Activated T-helper 1 cell treated with anti-CD3 and anti-CD28 coated beads, Interleukin-12 subunit alpha, Interleukin-12 subunit beta, Interleukin-2, Interleukin-4 antibody, amounts not matched to agents 30 ng/mL and 10 ng/mL and 1 ng/mL, durations not matched to agents 14 hours and 24 hours and 36 hours (primary cell): ENCODE measurements at regions of chr2 and their contacts with region 1.

Region 1: DNA sequence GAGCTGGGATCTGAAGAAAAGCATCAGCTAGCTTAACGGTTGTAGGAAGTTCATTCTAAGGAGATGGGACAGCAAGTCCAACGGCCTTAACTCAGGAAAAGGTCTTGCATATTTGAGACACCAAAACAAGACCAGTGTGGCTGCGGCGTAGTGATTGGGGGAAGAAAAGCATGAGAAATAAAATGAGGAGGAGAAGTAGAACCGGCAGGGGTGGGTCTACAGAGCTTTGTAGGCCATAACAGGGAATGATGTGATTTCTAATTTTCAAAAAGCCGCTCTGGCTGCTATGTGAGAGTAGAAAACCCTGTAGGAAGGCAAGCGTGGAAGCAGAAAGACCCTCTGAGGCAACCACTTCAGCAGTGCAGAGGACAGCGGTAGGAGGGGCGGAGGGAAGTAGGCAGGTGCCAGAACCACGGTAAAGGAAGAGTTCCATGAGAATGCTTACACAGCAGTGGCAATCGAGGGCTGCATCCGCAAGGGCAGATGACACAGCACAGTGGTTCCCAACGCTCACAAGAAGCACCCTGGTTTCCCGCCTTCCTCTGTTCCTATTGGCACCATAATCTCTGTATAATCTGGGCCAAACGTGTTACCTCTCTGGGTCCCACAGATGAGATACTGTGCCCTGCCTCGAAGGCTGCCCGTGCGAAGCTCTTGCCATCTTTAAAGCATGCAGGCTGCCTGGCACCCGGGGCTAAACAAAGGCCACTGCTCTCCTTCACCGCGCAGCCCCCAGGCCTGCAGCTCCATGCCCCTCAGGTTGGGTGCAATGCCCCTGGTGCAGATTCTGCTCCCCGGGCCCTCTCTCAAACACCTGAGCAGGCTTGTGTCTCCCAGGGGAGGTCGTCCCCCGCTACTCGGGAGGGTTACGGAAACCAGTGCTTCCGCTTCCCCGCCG is 791 bp downstream of the ANKRD39 start:
- DNase-seq: no peak
- H3K4me3 Mint-ChIP-seq: peak overlapping the region; percentile 85
- H3K27ac Mint-ChIP-seq: peak overlapping the region; percentile 88
- H3K4me1 Mint-ChIP-seq: peaks cover 26% of the 10 kb centered on the region
- H3K27me3 Mint-ChIP-seq: no peaks in the 10 kb centered on the region

Region 2: GRCh38 chr2:96208143-96209010 is 648.6 kb before region 1 on chr2 and contains the start of gene STARD7:
- intact Hi-C with region 1: no loop called
- DNase-seq: peak; percentile 98
- H3K4me3 Mint-ChIP-seq: peak within 1 kb of the TSS; percentile 96
- H3K27ac Mint-ChIP-seq: peak within 1 kb of the TSS; percentile 94
- H3K4me1 Mint-ChIP-seq: peaks cover 57% of the 10 kb centered on the region
- H3K27me3 Mint-ChIP-seq: no peaks in the 10 kb centered on the region
- total RNA-seq, gene STARD7: 216 and 229 TPM in 2 replicates

Region 3: GRCh38 chr2:96739633-96740428 is 117.2 kb before region 1 on chr2 and contains the start of gene LMAN2L:
- intact Hi-C with region 1: loop called (anchors 5 kb)
- DNase-seq: peak; percentile 94
- H3K4me3 Mint-ChIP-seq: peak within 1 kb of the TSS; percentile 90
- H3K27ac Mint-ChIP-seq: peak within 1 kb of the TSS; percentile 77
- H3K4me1 Mint-ChIP-seq: peaks cover 32% of the 10 kb centered on the region
- H3K27me3 Mint-ChIP-seq: no peaks in the 10 kb centered on the region
- total RNA-seq, gene LMAN2L: 5.6 and 6.0 TPM in 2 replicates

Region 4: DNA sequence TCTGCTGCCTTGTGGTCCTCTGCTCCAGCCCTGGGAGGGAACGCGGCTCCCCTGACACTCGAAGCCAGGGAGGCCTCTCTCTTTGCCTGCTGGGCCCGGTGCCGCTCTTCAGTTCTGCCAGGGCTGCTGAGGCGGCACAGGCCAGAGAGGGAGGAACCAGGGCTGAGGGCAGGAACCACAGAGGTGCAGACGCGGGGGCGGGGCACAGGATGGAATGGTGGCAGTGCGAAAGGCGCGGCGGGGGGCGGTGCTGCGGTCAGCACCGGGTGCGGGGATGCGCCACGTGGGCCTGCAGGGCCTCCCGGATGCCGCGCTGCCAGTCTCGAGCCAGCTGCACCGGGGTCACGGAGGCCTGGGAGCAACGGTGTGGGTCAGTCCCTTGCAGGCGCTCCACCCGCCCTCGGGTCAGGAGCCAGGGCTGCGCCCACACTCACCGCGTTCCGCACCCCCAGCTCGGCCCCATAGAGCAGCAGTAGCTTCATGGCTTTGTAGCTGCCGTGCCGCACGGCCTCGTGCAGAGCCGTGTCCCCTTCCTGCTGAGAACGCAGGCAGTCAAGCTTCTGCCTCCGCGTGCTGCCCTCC is 17.6 kb before region 1 on chr2:
- intact Hi-C with region 1: loop called (anchors 2 kb)
- DNase-seq: peak; percentile 74
- H3K4me3 Mint-ChIP-seq: peak overlapping the region; percentile 45
- H3K27ac Mint-ChIP-seq: peak overlapping the region; percentile 65
- H3K4me1 Mint-ChIP-seq: peaks cover 14% of the 10 kb centered on the region
- H3K27me3 Mint-ChIP-seq: no peaks in the 10 kb centered on the region

Region 5: DNA sequence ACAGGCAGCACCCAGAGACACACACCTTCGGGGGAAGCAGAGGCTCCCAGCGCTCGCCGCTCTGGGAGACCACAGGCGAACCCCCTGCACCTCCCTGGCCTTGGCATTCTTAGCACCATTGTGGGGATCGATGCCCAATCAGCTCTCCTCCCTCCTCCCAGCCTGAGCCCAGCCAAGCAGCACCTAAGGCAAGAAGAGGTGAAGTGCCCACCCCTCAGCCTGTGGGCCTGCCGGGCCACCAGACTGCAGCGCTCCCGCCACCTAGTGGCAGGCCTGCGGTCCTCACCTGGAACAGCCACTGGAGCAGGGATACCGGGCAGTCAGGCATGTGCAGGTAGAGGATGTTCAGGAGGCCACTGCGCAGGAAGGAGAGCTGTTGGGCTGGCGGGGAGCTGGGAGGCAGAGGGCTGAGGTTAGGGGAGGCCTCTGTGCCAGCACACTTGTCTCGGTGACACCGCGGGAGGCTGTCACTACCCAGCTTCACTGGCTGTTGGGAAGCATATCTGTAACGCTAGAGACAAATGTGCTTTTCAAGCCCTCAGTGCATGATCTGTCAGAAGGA is 94.1 kb after region 1 on chr2:
- intact Hi-C with region 1: loop called (anchors 1 kb)
- DNase-seq: peak; percentile 68
- H3K4me3 Mint-ChIP-seq: no peak overlapping the region
- H3K27ac Mint-ChIP-seq: no peak overlapping the region
- H3K4me1 Mint-ChIP-seq: peaks cover 31% of the 10 kb centered on the region
- H3K27me3 Mint-ChIP-seq: peaks cover 6% of the 10 kb centered on the region

Region 6: GRCh38 chr2:97011977-97012565 is 155.0 kb after region 1 on chr2:
- intact Hi-C with region 1: loop called (anchors 5 kb)
- DNase-seq: peak; percentile 19
- H3K4me3 Mint-ChIP-seq: no peak overlapping the region
- H3K27ac Mint-ChIP-seq: no peak overlapping the region
- H3K4me1 Mint-ChIP-seq: no peaks in the 10 kb centered on the region
- H3K27me3 Mint-ChIP-seq: peaks cover 45% of the 10 kb centered on the region